ENCODE measurements at regions of chr4 and their contacts with region 1.

Region 1: DNA sequence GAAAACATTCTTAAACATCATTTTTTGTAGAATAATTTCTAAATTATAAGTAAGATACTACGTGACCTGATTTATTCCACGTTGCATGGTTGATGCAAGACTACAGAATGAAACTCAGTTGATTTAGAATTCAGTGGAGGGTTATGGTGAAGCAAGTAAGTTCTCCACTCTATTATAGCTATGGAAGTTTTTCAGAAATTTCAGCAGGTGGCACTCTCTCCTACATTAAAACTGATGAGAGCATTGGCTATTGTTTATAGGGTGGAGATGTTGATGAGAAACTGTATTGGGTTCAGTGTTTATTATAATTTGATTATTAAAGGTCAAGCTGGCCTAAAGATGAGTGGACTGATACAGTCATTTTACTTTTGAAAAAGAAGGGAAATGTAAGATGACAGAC is 88.0 kb downstream of the FNIP2 start:
- DNase-seq: peak; percentile 49
- H3K4me3 Mint-ChIP-seq: no peak overlapping the region
- H3K27ac Mint-ChIP-seq: no peak overlapping the region
- H3K4me1 Mint-ChIP-seq: no peaks in the 10 kb centered on the region
- H3K27me3 Mint-ChIP-seq: no peaks in the 10 kb centered on the region
- CTCF ChIP-seq: peak; percentile 45

Region 2: DNA sequence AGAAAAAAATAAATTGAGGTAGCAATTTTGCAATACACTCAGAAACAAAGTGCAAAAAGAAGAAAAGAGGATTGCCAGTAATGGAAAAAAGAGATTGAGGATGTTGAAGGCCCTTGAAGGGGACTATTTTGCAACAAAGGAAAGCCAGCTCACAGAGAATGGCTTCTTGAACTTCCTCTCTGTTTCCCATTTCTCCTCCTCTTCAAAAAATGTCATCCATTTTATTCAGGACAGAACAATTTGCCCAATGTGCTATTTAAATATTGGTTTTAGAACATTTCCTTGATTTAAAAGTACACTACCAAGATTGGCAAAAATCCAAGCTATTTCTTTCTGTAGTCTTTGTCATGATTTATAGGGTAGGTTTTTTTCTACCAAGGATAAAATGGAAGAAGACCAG is 744.2 kb before region 1 on chr4:
- CTCF ChIA-PET with region 1: no interaction called
- POLR2A ChIA-PET with region 1: no interaction called
- intact Hi-C with region 1: no loop called
- DNase-seq: no peak
- H3K4me3 Mint-ChIP-seq: no peak overlapping the region
- H3K27ac Mint-ChIP-seq: no peak overlapping the region
- H3K4me1 Mint-ChIP-seq: no peaks in the 10 kb centered on the region
- H3K27me3 Mint-ChIP-seq: no peaks in the 10 kb centered on the region
- CTCF ChIP-seq: no peak

Region 3: DNA sequence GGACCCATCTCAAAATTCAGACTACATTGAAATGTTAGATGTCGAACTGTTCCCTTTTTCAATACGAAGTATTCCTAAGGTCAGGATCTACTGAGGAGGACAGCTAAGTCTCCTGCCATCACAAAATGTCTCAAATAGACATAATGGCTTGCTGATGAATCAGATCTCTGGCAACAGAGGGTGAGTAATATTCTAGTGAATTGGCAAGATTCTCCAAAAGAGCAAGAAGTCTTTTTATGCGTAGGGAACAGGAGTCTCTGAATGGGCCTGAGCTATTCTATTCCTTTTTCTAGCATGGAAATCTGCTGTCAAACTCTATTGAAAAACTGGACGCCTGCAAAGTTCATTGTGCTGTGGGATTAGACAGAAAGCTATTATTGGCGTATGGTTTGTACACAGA is 57.4 kb after region 1 on chr4:
- CTCF ChIA-PET with region 1: no interaction called
- POLR2A ChIA-PET with region 1: no interaction called
- intact Hi-C with region 1: no loop called
- DNase-seq: peak; percentile 68
- H3K4me3 Mint-ChIP-seq: no peak overlapping the region
- H3K27ac Mint-ChIP-seq: peak overlapping the region; percentile 44
- H3K4me1 Mint-ChIP-seq: peaks cover 11% of the 10 kb centered on the region
- H3K27me3 Mint-ChIP-seq: no peaks in the 10 kb centered on the region
- CTCF ChIP-seq: no peak

Region 4: DNA sequence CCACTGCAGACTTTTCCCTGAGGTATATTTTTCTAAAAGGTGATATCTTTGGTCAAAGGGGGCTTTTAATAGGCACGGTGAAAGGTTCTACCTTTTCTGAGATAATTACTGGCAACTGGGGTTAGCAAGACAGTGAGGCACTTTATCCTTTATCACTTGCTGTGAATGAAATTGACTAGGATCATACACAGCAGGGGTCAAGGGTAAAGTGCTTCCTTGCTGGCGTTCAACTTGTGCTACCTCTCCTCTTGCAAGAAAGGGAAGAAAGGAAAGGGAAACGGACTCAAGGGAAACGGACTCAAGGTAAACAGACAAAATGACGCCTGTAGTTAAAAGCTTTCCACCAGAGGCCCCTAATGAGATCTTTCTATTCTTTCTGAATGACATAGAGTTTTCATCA is 167.4 kb after region 1 on chr4:
- CTCF ChIA-PET with region 1: interaction called, 4 read pairs
- POLR2A ChIA-PET with region 1: no interaction called
- intact Hi-C with region 1: loop called (anchors 5 kb)
- DNase-seq: no peak
- H3K4me3 Mint-ChIP-seq: no peak overlapping the region
- H3K27ac Mint-ChIP-seq: no peak overlapping the region
- H3K4me1 Mint-ChIP-seq: no peaks in the 10 kb centered on the region
- H3K27me3 Mint-ChIP-seq: no peaks in the 10 kb centered on the region
- CTCF ChIP-seq: no peak

Region 5: GRCh38 chr4:159201168-159201567 is 344.3 kb after region 1 on chr4:
- CTCF ChIA-PET with region 1: interaction called, 57 read pairs
- POLR2A ChIA-PET with region 1: interaction called, 5 read pairs
- intact Hi-C with region 1: loop called (anchors 1 kb)
- DNase-seq: no peak
- H3K4me3 Mint-ChIP-seq: no peak overlapping the region
- H3K27ac Mint-ChIP-seq: no peak overlapping the region
- H3K4me1 Mint-ChIP-seq: peaks cover 11% of the 10 kb centered on the region
- H3K27me3 Mint-ChIP-seq: no peaks in the 10 kb centered on the region
- CTCF ChIP-seq: no peak

Region 6: DNA sequence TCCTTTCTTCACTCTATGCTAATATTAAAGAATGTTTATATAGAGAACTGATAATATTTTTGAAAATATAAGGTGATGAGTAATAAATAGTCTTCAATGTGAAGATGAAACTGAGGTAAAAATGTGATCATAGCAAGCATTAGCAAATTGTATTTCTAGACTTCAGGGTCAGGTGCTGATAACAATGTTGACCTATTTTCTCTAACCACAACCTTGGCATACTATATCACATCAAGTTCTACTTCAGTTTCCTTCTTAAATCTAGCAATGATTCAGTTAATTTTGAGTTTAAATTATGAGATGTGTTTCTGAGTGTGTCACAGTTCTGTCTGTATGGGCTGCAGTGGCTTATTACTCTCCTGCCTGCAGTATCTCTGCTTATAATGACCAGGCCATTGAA is 455.4 kb after region 1 on chr4:
- CTCF ChIA-PET with region 1: no interaction called
- POLR2A ChIA-PET with region 1: no interaction called
- intact Hi-C with region 1: loop called (anchors 10 kb)
- DNase-seq: no peak
- H3K4me3 Mint-ChIP-seq: no peak overlapping the region
- H3K27ac Mint-ChIP-seq: no peak overlapping the region
- H3K4me1 Mint-ChIP-seq: peaks cover 8% of the 10 kb centered on the region
- H3K27me3 Mint-ChIP-seq: no peaks in the 10 kb centered on the region
- CTCF ChIP-seq: no peak

Region 7: GRCh38 chr4:159685340-159686092 is 828.7 kb after region 1 on chr4:
- CTCF ChIA-PET with region 1: no interaction called
- POLR2A ChIA-PET with region 1: no interaction called
- intact Hi-C with region 1: no loop called
- DNase-seq: no peak
- H3K4me3 Mint-ChIP-seq: no peak overlapping the region
- H3K27ac Mint-ChIP-seq: peak overlapping the region; percentile 85
- H3K4me1 Mint-ChIP-seq: peaks cover 18% of the 10 kb centered on the region
- H3K27me3 Mint-ChIP-seq: no peaks in the 10 kb centered on the region
- CTCF ChIP-seq: no peak

Measured in MCF 10A (cell line).